K562 (cell line): ENCODE measurements at regions of chr15 and their contacts with region 1.

Region 1: GRCh38 chr15:79028411-79028964 is 62.1 kb downstream of the RASGRF1 start:
- DNase-seq: peak; percentile 62 to 73 (median 70)
- ATAC-seq: peak; percentile 81
- H3K4me3 ChIP-seq: no peak overlapping the region
- H3K27ac ChIP-seq: no peak overlapping the region
- H3K4me1 ChIP-seq: peaks cover 0 to 4% of the 10 kb centered on the region in 2 experiments; a peak in 2 of 5 replicates
- H3K27me3 ChIP-seq: peaks cover 0 to 43% of the 10 kb centered on the region in 2 experiments; a peak in 4 of 5 replicates
- CTCF ChIP-seq: peak; percentile 89 to 93 (median 92)
- EP300 ChIP-seq: no peak
- POLR2A ChIP-seq: no peak
- RAD21 ChIP-seq: peak; percentile 84 to 88

Region 2: GRCh38 chr15:78937132-78937739 is 91.3 kb before region 1 on chr15:
- CTCF ChIA-PET with region 1: no interaction called
- POLR2A ChIA-PET with region 1: no interaction called
- in situ Hi-C with region 1: no loop called
- intact Hi-C with region 1: no loop called
- DNase-seq: peak; percentile 53 to 91 (median 72)
- ATAC-seq: peak; percentile 91
- H3K4me3 ChIP-seq: peak overlapping the region; percentile 20
- H3K27ac ChIP-seq: peak overlapping the region; percentile 63
- H3K4me1 ChIP-seq: peaks cover 14 to 18% of the 10 kb centered on the region in 2 experiments; a peak in 4 of 5 replicates
- H3K27me3 ChIP-seq: no peaks in the 10 kb centered on the region
- CTCF ChIP-seq: no peak
- EP300 ChIP-seq: peak; percentile 92; the same call in 1 of the 2 replicates
- POLR2A ChIP-seq: peak; percentile 68
- RAD21 ChIP-seq: no peak

Region 3: GRCh38 chr15:79041601-79042168 is 13.2 kb after region 1 on chr15:
- CTCF ChIA-PET with region 1: no interaction called
- POLR2A ChIA-PET with region 1: no interaction called
- in situ Hi-C with region 1: no loop called
- intact Hi-C with region 1: no loop called
- DNase-seq: no peak
- ATAC-seq: no peak
- H3K4me3 ChIP-seq: no peak overlapping the region
- H3K27ac ChIP-seq: no peak overlapping the region
- H3K4me1 ChIP-seq: no peaks in the 10 kb centered on the region
- H3K27me3 ChIP-seq: peaks cover 3 to 9% of the 10 kb centered on the region in 2 experiments; a peak in 3 of 5 replicates
- CTCF ChIP-seq: no peak
- EP300 ChIP-seq: no peak
- POLR2A ChIP-seq: no peak
- RAD21 ChIP-seq: no peak

Region 4: DNA sequence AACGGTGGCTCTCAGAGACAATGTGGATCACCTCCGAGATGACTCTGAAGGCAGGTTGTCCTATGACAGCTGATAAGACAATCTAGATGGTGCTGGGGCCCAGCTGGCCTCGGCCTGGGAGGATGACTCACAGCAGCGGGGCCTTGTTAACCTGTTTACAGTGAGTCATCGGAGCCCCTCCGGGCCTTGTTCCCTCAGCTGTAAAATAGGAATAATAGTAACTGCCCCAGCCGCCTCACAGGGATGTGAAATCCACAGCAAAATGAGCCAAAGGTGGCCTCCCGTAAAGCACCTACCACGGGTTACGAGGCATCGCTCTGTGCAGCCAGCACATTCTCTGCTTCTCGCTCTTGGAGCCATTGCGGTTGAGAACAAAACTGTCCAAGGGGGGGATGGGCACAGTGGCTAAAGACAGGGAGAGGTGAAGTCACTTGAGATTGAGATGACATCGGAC is 150.6 kb after region 1 on chr15:
- CTCF ChIA-PET with region 1: interaction called, 39 read pairs
- POLR2A ChIA-PET with region 1: interaction called, 4 read pairs
- in situ Hi-C with region 1: loop called (anchors 5 kb)
- intact Hi-C with region 1: loop called (anchors 1 kb)
- DNase-seq: peak; percentile 87 to 90 (median 88)
- ATAC-seq: peak; percentile 95
- H3K4me3 ChIP-seq: no peak overlapping the region
- H3K27ac ChIP-seq: peak overlapping the region; percentile 58; the same call in 2 of the 3 replicates
- H3K4me1 ChIP-seq: peaks cover 10 to 21% of the 10 kb centered on the region in 2 experiments; a peak in 4 of 5 replicates
- H3K27me3 ChIP-seq: peaks cover 0 to 14% of the 10 kb centered on the region in 2 experiments; a peak in 3 of 5 replicates
- CTCF ChIP-seq: no peak
- EP300 ChIP-seq: peak; percentile 68
- POLR2A ChIP-seq: no peak
- RAD21 ChIP-seq: no peak

Region 5: GRCh38 chr15:79184465-79184892 is 156.0 kb after region 1 on chr15:
- CTCF ChIA-PET with region 1: interaction called, 39 read pairs
- POLR2A ChIA-PET with region 1: interaction called, 4 read pairs
- in situ Hi-C with region 1: loop called (anchors 5 kb)
- intact Hi-C with region 1: loop called (anchors 1 kb)
- DNase-seq: peak; percentile 68 to 79 (median 70)
- ATAC-seq: peak; percentile 91
- H3K4me3 ChIP-seq: no peak overlapping the region
- H3K27ac ChIP-seq: no peak overlapping the region
- H3K4me1 ChIP-seq: peaks cover 5 to 9% of the 10 kb centered on the region in 2 experiments; a peak in 2 of 5 replicates
- H3K27me3 ChIP-seq: peaks cover 14 to 25% of the 10 kb centered on the region in 2 experiments; a peak in 4 of 5 replicates
- CTCF ChIP-seq: peak; percentile 85 to 93 (median 92)
- EP300 ChIP-seq: no peak
- POLR2A ChIP-seq: no peak
- RAD21 ChIP-seq: peak; percentile 81 to 94